HCT116 (cell line): ENCODE measurements at regions of chr14 and their contacts with region 1.

Region 1: GRCh38 chr14:68548194-68549056 is 244.4 kb downstream of the ZFP36L1 start:
- DNase-seq: peak; percentile 82
- ATAC-seq: peak; percentile 77
- H3K4me3 ChIP-seq: peak overlapping the region; percentile 4 to 38; a peak in 3 of 4 replicates
- H3K27ac ChIP-seq: peak overlapping the region; percentile 98
- H3K4me1 ChIP-seq: peaks cover 74 to 94% of the 10 kb centered on the region in 2 experiments
- H3K27me3 ChIP-seq: no peaks in the 10 kb centered on the region
- CTCF ChIP-seq: no peak
- POLR2A ChIP-seq: no peak
- RAD21 ChIP-seq: no peak

Region 2: DNA sequence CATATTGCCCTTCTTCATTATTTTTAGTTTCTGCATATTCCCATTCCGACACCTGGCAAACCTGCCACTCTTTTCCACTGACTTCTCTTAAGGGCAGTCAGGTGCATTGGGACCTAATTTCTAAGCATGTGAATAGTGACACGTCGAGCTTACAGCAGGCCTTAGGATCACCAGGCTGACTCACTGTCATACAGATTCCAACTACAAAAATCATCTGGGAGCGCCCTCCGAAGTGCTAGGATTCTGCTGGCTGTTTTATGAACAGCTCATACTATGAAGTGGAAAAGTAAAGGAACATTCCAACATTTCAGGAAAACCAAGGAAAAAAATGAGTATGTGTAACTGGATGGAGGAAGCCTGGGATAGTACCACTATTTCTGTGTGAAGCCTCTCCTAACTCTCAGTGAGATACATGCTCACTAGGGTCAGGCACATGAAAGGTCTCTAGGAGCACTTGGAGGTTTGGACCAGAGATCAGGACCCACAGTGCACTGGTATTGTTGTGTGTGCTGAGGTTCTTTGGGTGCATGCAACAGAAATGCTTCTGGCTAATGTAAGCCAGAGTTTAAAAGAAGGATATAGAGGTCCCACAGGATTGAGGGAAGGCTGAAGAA is 12.9 kb before region 1 on chr14:
- CTCF ChIA-PET with region 1: interaction called, 3 read pairs
- POLR2A ChIA-PET with region 1: interaction called, 21 read pairs
- RAD21 ChIA-PET with region 1: no interaction called
- intact Hi-C with region 1: no loop called
- DNase-seq: peak; percentile 79
- ATAC-seq: peak; percentile 89
- H3K4me3 ChIP-seq: no peak overlapping the region
- H3K27ac ChIP-seq: peak overlapping the region; percentile 56; the same call in 1 of the 2 replicates
- H3K4me1 ChIP-seq: peaks cover 17 to 26% of the 10 kb centered on the region in 2 experiments
- H3K27me3 ChIP-seq: no peaks in the 10 kb centered on the region
- CTCF ChIP-seq: no peak
- POLR2A ChIP-seq: no peak
- RAD21 ChIP-seq: peak; percentile 49; the same call in 1 of the 2 replicates

Region 3: GRCh38 chr14:68598621-68599447 is 50.4 kb after region 1 on chr14:
- CTCF ChIA-PET with region 1: no interaction called
- POLR2A ChIA-PET with region 1: no interaction called
- RAD21 ChIA-PET with region 1: interaction called in 1 of 2 experiments, 3 read pairs
- intact Hi-C with region 1: loop called (anchors 2 kb)
- DNase-seq: peak; percentile 97
- ATAC-seq: peak; percentile 87
- H3K4me3 ChIP-seq: peak overlapping the region; percentile 7 to 39; a peak in 3 of 4 replicates
- H3K27ac ChIP-seq: peak overlapping the region; percentile 94
- H3K4me1 ChIP-seq: peaks cover 45 to 72% of the 10 kb centered on the region in 2 experiments
- H3K27me3 ChIP-seq: no peaks in the 10 kb centered on the region
- CTCF ChIP-seq: no peak
- POLR2A ChIP-seq: no peak
- RAD21 ChIP-seq: peak; percentile 50; the same call in 1 of the 2 replicates

Region 4: DNA sequence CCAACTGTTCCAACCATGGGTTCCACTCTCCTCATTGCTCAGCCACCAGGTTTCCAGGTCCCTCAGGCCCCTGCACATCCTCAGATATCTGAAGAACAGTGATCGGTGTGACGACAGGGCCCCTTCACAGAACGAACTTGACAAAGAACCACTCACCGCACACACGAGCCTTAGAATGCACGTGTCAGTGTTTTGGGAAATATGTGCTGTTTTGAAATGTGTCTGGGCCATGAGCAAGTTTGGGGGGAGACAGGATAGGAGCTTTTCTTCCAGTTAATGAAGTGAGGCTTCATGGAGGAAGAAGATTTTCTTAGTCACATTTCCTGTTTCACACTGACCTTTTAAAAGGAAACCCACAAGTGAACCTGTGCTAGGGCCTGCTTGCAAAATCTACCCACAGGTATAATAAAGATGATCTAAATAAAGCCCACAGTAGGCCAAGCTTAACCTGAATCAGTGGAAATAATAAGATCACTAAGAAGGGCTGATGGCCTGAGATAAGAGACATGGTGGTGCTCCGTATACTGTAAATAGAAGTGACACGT is 185.9 kb after region 1 on chr14:
- CTCF ChIA-PET with region 1: no interaction called
- POLR2A ChIA-PET with region 1: no interaction called
- RAD21 ChIA-PET with region 1: no interaction called
- intact Hi-C with region 1: no loop called
- DNase-seq: no peak
- ATAC-seq: no peak
- H3K4me3 ChIP-seq: no peak overlapping the region
- H3K27ac ChIP-seq: no peak overlapping the region
- H3K4me1 ChIP-seq: no peaks in the 10 kb centered on the region; a peak in 1 of 4 replicates
- H3K27me3 ChIP-seq: no peaks in the 10 kb centered on the region
- CTCF ChIP-seq: no peak
- POLR2A ChIP-seq: no peak
- RAD21 ChIP-seq: no peak

Region 5: GRCh38 chr14:68788996-68789820 is 240.8 kb after region 1 on chr14:
- CTCF ChIA-PET with region 1: no interaction called
- POLR2A ChIA-PET with region 1: interaction called, 10 read pairs
- RAD21 ChIA-PET with region 1: interaction called in 1 of 2 experiments, 3 read pairs
- intact Hi-C with region 1: loop called (anchors 2 kb)
- DNase-seq: no peak
- ATAC-seq: peak; percentile 14
- H3K4me3 ChIP-seq: peak overlapping the region; percentile 83 to 89
- H3K27ac ChIP-seq: peak overlapping the region; percentile 99
- H3K4me1 ChIP-seq: peaks cover 58 to 83% of the 10 kb centered on the region in 2 experiments
- H3K27me3 ChIP-seq: no peaks in the 10 kb centered on the region
- CTCF ChIP-seq: peak in 2 of 3 experiments; percentile 67 to 74; a peak in 4 of 6 replicates
- POLR2A ChIP-seq: no peak
- RAD21 ChIP-seq: no peak